AG04449 (cell line): ENCODE measurements at regions of chr6 and their contacts with region 1.

Region 1: GRCh38 chr6:16514249-16514648 is 247.0 kb downstream of the ATXN1 start:
- DNase-seq: no peak
- H3K4me3 ChIP-seq: no peak overlapping the region
- CTCF ChIP-seq: peak; percentile 51

Region 2: GRCh38 chr6:16466800-16467553 is 47.3 kb before region 1 on chr6:
- CTCF ChIA-PET with region 1: interaction called, 11 read pairs
- POLR2A ChIA-PET with region 1: no interaction called
- DNase-seq: no peak
- H3K4me3 ChIP-seq: no peak overlapping the region
- CTCF ChIP-seq: no peak

Region 3: DNA sequence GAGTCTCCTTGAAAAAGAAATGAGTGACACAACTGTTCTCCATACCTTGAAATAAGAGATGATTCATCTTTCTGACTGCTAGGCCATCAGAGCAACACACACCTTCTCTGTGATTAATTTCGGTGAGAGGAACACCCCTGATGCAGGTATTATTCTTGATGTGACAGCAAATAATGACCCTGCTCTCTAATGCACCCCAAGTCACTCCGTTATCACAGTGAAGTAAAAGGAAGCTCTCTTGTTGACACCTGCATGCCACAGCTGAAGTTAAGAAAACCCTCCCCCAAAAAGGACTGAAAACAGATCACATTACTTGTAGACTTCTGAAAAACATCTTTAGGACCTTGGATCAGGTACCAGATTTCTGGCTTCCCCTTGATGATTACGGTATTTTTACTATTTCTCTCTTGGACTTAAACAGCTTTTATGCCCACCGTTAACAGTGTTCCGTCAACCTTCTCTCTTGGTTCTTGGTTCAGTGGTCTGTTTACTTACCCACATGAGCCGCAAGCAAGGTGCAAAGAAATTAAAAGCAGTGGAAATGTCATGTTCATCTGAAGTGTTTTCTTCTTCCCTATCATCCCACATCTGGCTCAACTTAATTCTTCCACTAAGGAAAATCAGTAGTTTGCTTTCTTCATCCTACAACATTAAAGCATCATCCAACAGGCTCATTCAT is 26.1 kb before region 1 on chr6:
- CTCF ChIA-PET with region 1: interaction called, 20 read pairs
- POLR2A ChIA-PET with region 1: no interaction called
- DNase-seq: no peak
- H3K4me3 ChIP-seq: no peak overlapping the region
- CTCF ChIP-seq: no peak

Region 4: GRCh38 chr6:16494793-16495192 is 19.5 kb before region 1 on chr6:
- CTCF ChIA-PET with region 1: interaction called, 20 read pairs
- POLR2A ChIA-PET with region 1: no interaction called
- DNase-seq: no peak
- H3K4me3 ChIP-seq: no peak overlapping the region
- CTCF ChIP-seq: no peak

Region 5: DNA sequence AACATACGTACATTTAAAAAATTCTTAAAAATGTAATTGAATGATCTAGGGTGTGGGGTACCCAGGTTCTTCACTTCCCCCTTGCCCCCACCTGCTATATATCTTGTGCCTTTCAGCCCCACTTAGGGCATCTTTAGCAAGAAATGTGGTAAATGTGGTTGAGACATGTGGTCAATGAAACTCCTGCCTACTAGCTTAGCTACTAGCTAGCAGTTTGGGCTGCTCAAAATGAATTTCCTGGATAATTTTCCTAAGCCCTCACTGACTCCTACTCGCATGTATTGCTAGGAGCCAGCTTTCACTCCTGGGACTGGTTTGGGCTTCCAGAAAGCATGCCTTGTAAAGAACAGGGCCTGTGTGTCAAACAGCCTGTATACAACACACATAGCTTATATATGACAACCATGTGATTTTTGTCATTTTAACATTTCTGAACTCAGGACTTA is 10.3 kb before region 1 on chr6:
- CTCF ChIA-PET with region 1: interaction called, 16 read pairs
- POLR2A ChIA-PET with region 1: no interaction called
- DNase-seq: no peak
- H3K4me3 ChIP-seq: no peak overlapping the region
- CTCF ChIP-seq: no peak

Region 6: DNA sequence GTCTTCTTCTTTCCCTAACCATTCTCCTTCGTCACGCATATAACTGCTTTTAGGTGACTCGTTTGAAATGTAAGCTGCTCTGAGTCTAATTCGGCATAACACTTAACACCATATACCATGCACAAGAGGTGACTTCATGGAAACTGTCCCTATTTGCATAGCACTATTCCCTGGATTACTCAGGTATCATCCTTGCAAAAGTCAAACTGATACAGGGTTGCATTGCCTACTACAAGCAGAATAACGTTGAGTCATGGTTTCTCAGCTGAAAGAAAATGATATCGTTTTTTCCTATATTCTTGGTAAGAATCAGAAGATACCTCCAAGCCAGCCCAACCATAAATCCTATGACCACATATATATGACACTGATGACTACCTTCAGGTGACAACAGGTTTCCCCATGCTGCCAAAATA is 19.5 kb after region 1 on chr6:
- CTCF ChIA-PET with region 1: interaction called, 15 read pairs
- POLR2A ChIA-PET with region 1: no interaction called
- DNase-seq: no peak
- H3K4me3 ChIP-seq: no peak overlapping the region
- CTCF ChIP-seq: no peak

Region 7: GRCh38 chr6:17156112-17156921 is 642.1 kb after region 1 on chr6:
- CTCF ChIA-PET with region 1: no interaction called
- POLR2A ChIA-PET with region 1: no interaction called
- DNase-seq: peak; percentile 64
- H3K4me3 ChIP-seq: no peak overlapping the region
- CTCF ChIP-seq: peak; percentile 66